ENCODE measurements at regions of chr10 and their contacts with region 1.

Region 1: DNA sequence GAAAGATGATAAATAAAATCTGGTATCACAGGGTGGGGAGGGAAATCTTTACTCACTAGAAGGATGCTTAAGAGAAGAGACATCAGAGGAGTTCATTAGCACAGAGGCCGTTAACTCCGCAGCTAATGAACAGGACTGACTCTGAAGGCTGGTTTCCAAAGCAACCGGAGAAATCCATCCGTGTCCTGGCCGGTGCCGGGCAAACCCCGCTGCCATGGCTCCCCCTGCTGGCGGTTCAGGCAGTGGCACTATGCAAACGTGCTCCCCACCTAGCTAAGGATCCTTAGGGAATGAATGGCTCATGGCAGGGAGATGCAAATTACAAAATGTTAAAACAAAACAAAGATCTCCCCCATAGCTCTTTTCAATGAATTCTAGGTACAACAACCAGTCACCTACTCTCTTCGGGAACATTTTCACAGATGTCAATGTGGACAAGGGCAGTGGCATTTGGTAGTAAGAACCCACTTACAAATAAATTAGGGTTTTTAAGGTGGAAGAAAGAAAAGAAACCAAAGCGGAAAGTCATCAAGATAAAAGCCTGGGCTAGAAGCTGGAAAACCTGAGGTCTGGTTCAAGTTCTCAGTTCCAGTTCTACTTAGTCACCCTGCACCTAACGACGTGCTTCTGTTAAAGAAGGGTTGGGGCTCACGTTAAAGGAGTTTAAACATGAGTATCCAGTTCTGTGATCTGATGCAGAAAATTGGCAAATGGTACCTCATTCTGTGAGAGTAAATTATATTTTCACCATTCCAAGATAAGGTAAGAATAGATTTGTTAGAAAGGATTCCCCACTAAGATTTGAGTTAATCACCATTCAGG is 138.2 kb downstream of the SVIL start:
- DNase-seq: peak; percentile 83
- ATAC-seq: peak; percentile 71
- H3K4me3 Mint-ChIP-seq: no peak overlapping the region
- H3K27ac Mint-ChIP-seq: no peak overlapping the region
- H3K4me1 Mint-ChIP-seq: peaks cover 6% of the 10 kb centered on the region
- H3K27me3 Mint-ChIP-seq: no peaks in the 10 kb centered on the region

Region 2: DNA sequence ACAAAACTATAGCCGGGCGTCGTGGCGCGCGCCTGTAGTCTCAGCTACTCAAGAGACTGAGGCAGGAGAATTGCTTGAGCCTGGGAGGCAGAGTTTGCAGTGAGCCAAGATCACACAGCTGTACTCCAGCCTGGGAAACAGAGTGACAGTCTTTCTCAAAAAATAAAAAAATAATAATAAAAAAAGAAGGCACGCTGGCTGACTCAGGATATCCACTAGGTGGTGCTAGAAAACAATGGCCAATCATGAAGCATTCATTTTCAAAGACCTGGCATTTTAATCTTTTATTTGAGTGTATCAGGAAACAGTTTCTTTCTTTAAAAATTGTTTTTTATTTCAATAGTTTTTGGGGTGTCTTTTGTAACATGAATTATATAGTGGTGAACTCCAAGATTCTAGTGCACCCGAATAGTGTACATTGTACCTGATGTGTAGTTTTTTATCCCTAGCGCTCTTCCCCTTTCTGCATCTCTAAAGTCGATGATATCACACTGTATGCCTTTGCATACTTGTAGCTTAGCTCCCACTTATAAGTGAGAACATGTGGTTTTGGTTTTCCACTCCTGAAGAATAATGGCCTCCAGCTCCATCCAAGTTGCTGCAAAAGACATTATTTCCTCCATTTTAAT is 119.1 kb before region 1 on chr10:
- CTCF ChIA-PET with region 1: no interaction called
- POLR2A ChIA-PET with region 1: no interaction called
- intact Hi-C with region 1: loop called (anchors 1 to 2 kb)
- DNase-seq: no peak
- ATAC-seq: peak; percentile 12
- H3K4me3 Mint-ChIP-seq: no peak overlapping the region
- H3K27ac Mint-ChIP-seq: no peak overlapping the region
- H3K4me1 Mint-ChIP-seq: peaks cover 8% of the 10 kb centered on the region
- H3K27me3 Mint-ChIP-seq: peaks cover 5% of the 10 kb centered on the region

Region 3: GRCh38 chr10:29386342-29386999 is 110.1 kb before region 1 on chr10:
- CTCF ChIA-PET with region 1: interaction called, 7 read pairs
- POLR2A ChIA-PET with region 1: no interaction called
- intact Hi-C with region 1: loop called in 1 of 2 experiments (anchors 1 kb)
- DNase-seq: peak; percentile 33
- ATAC-seq: peak; percentile 49
- H3K4me3 Mint-ChIP-seq: no peak overlapping the region
- H3K27ac Mint-ChIP-seq: no peak overlapping the region
- H3K4me1 Mint-ChIP-seq: no peaks in the 10 kb centered on the region
- H3K27me3 Mint-ChIP-seq: peaks cover 4% of the 10 kb centered on the region

Region 4: GRCh38 chr10:29443745-29444523 is 52.6 kb before region 1 on chr10:
- CTCF ChIA-PET with region 1: interaction called, 29 read pairs
- POLR2A ChIA-PET with region 1: no interaction called
- intact Hi-C with region 1: loop called (anchors 1 to 2 kb)
- DNase-seq: peak; percentile 21
- ATAC-seq: no peak
- H3K4me3 Mint-ChIP-seq: no peak overlapping the region
- H3K27ac Mint-ChIP-seq: no peak overlapping the region
- H3K4me1 Mint-ChIP-seq: peaks cover 12% of the 10 kb centered on the region
- H3K27me3 Mint-ChIP-seq: no peaks in the 10 kb centered on the region

Region 5: DNA sequence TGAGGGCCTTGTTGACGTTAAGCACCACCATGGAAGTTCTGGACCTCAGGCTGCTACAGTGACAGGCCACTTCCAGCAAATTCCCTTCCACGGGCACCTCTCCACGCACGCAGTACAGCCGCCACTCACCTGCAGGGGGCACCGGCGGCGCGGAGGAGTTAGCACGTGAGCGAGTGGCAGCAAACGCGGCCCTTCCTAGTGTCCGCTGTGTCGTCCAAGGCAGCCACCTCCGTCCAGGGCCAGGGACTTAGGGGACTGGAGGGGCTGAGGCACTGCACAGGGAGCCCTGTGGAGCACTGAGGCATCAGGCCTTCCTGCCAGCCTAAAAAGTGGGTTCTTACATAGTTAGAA is 26.2 kb before region 1 on chr10:
- CTCF ChIA-PET with region 1: interaction called, 6 read pairs
- POLR2A ChIA-PET with region 1: no interaction called
- intact Hi-C with region 1: loop called in 1 of 2 experiments (anchors 1 kb)
- DNase-seq: peak; percentile 37
- ATAC-seq: no peak
- H3K4me3 Mint-ChIP-seq: no peak overlapping the region
- H3K27ac Mint-ChIP-seq: no peak overlapping the region
- H3K4me1 Mint-ChIP-seq: peaks cover 2% of the 10 kb centered on the region
- H3K27me3 Mint-ChIP-seq: no peaks in the 10 kb centered on the region

Region 6: DNA sequence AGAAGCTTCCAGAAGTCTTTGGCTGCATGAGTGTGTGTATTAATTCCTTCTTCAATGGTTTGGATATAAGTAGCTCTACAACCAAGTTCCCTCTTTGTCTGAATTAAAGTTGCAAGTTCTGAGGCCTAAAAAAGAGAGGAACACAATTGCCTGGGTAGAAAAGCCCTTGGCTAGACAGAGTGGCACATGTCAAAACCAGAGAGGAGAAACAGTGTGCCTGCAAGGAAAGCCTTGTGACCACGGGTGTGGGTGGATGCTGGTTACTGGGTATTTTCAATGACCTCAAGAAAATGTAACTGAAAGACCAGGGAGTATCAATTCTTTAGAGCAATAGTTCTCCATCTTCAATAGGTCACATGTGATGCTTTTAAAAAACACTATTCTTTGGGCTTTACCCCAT is 10.1 kb before region 1 on chr10:
- CTCF ChIA-PET with region 1: interaction called, 10 read pairs
- POLR2A ChIA-PET with region 1: no interaction called
- intact Hi-C with region 1: no loop called
- DNase-seq: peak; percentile 62
- ATAC-seq: no peak
- H3K4me3 Mint-ChIP-seq: no peak overlapping the region
- H3K27ac Mint-ChIP-seq: peak overlapping the region; percentile 77
- H3K4me1 Mint-ChIP-seq: peaks cover 54% of the 10 kb centered on the region
- H3K27me3 Mint-ChIP-seq: no peaks in the 10 kb centered on the region

Region 7: GRCh38 chr10:30088178-30088577 is 591.6 kb after region 1 on chr10:
- CTCF ChIA-PET with region 1: no interaction called
- POLR2A ChIA-PET with region 1: no interaction called
- intact Hi-C with region 1: no loop called
- DNase-seq: no peak
- ATAC-seq: no peak
- H3K4me3 Mint-ChIP-seq: no peak overlapping the region
- H3K27ac Mint-ChIP-seq: no peak overlapping the region
- H3K4me1 Mint-ChIP-seq: no peaks in the 10 kb centered on the region
- H3K27me3 Mint-ChIP-seq: peaks cover 12% of the 10 kb centered on the region

Measured in activated CD4-positive, alpha-beta T cell treated with anti-CD3 and anti-CD28 coated beads for 36 hours (primary cell).